Left cardiac atrium (tissue), 4 donors: ENCODE measurements at regions of chr15 and their contacts with region 1.

Region 1: DNA sequence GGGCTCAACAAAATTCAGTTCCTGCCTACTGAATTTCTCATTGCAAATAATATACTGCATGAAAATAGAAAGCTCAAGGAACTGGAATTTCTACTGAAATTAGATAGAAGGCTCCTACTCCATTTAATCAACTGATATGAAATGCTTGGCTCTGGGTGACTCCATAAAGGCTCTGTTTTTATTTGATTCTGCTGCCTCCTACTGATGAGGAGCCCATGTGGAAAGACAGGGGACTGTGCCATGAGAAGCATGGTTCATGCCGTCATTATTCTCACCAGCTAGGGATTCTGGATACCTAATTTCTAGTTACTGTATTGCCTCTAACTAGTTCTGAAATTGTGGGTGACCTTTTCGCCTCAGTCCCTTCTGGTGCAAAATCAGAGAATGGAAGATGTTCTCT is 366.2 kb upstream of the DPH6 start:
- DNase-seq: no peak
- ATAC-seq: peak; percentile 63 to 76

Region 2: GRCh38 chr15:35519541-35520149 is 392.6 kb before region 1 on chr15:
- intact Hi-C with region 1: loop called (anchors 5 to 10 kb)
- DNase-seq: no peak
- ATAC-seq: peak; percentile 66 to 74

Region 3: GRCh38 chr15:35751413-35752133 is 160.6 kb before region 1 on chr15:
- intact Hi-C with region 1: loop called in 1 of 2 experiments (anchors 10 kb)
- DNase-seq: peak; percentile 79
- ATAC-seq: peak; percentile 80 to 86

Region 4: DNA sequence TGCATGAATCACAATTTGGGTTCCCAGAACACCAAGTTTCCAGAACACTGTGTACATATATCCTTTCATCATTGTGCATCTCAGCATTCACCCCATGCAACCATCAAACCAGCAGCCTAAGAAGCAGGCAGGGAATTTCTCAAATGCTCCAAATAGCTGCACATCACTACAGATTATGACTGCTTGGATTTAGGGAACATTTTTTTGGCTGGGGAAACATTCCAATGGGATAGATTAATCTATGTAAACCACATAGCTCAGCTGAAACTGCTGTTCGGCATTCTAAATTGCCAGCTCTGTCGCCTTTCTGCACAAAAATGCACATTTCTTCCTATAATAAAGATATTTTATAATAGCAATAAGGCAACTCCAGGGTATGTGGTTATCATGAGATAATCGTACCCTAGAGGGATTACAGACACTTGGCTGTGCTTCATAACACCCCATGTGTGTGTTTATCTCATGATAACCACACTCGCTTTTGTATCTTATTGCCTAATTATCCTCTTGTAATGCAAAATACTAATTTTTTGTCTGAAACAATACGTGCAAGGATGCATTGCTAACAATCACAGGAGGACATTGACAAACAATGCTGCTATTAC is 117.5 kb after region 1 on chr15:
- intact Hi-C with region 1: no loop called
- DNase-seq: no peak
- ATAC-seq: no peak